ENCODE measurements at regions of chr1 and their contacts with region 1.

Region 1: GRCh38 chr1:231757101-231757404 is 130.5 kb downstream of the DISC1 start:
- DNase-seq: no peak
- ATAC-seq: no peak
- H3K4me3 ChIP-seq: no peak overlapping the region
- H3K4me3 Mint-ChIP-seq: peak overlapping the region; percentile 9
- H3K27ac ChIP-seq: no peak overlapping the region
- H3K27ac Mint-ChIP-seq: no peak overlapping the region
- H3K4me1 ChIP-seq: no peaks in the 10 kb centered on the region
- H3K4me1 Mint-ChIP-seq: no peaks in the 10 kb centered on the region
- H3K27me3 ChIP-seq: no peaks in the 10 kb centered on the region
- H3K27me3 Mint-ChIP-seq: no peaks in the 10 kb centered on the region
- CTCF ChIP-seq: peak; percentile 64

Region 2: GRCh38 chr1:231666220-231666936 is 90.7 kb before region 1 on chr1:
- CTCF ChIA-PET with region 1: no interaction called
- POLR2A ChIA-PET with region 1: no interaction called
- intact Hi-C with region 1: no loop called
- DNase-seq: no peak
- ATAC-seq: no peak
- H3K4me3 ChIP-seq: no peak overlapping the region
- H3K4me3 Mint-ChIP-seq: no peak overlapping the region
- H3K27ac ChIP-seq: no peak overlapping the region
- H3K27ac Mint-ChIP-seq: no peak overlapping the region
- H3K4me1 ChIP-seq: no peaks in the 10 kb centered on the region
- H3K4me1 Mint-ChIP-seq: peaks cover 16% of the 10 kb centered on the region
- H3K27me3 ChIP-seq: no peaks in the 10 kb centered on the region
- H3K27me3 Mint-ChIP-seq: no peaks in the 10 kb centered on the region
- CTCF ChIP-seq: no peak

Region 3: GRCh38 chr1:231768416-231768815 is 11.4 kb after region 1 on chr1:
- CTCF ChIA-PET with region 1: interaction called, 39 read pairs
- POLR2A ChIA-PET with region 1: no interaction called
- intact Hi-C with region 1: no loop called
- DNase-seq: no peak
- ATAC-seq: no peak
- H3K4me3 ChIP-seq: no peak overlapping the region
- H3K4me3 Mint-ChIP-seq: no peak overlapping the region
- H3K27ac ChIP-seq: no peak overlapping the region
- H3K27ac Mint-ChIP-seq: no peak overlapping the region
- H3K4me1 ChIP-seq: no peaks in the 10 kb centered on the region
- H3K4me1 Mint-ChIP-seq: no peaks in the 10 kb centered on the region
- H3K27me3 ChIP-seq: no peaks in the 10 kb centered on the region
- H3K27me3 Mint-ChIP-seq: no peaks in the 10 kb centered on the region
- CTCF ChIP-seq: no peak

Region 4: GRCh38 chr1:231776010-231776756 is 19.1 kb after region 1 on chr1:
- CTCF ChIA-PET with region 1: interaction called, 15 read pairs
- POLR2A ChIA-PET with region 1: no interaction called
- intact Hi-C with region 1: no loop called
- DNase-seq: no peak
- ATAC-seq: no peak
- H3K4me3 ChIP-seq: no peak overlapping the region
- H3K4me3 Mint-ChIP-seq: no peak overlapping the region
- H3K27ac ChIP-seq: no peak overlapping the region
- H3K27ac Mint-ChIP-seq: no peak overlapping the region
- H3K4me1 ChIP-seq: no peaks in the 10 kb centered on the region
- H3K4me1 Mint-ChIP-seq: no peaks in the 10 kb centered on the region
- H3K27me3 ChIP-seq: no peaks in the 10 kb centered on the region
- H3K27me3 Mint-ChIP-seq: no peaks in the 10 kb centered on the region
- CTCF ChIP-seq: no peak

Region 5: GRCh38 chr1:231818337-231818736 is 61.3 kb after region 1 on chr1:
- CTCF ChIA-PET with region 1: no interaction called
- POLR2A ChIA-PET with region 1: no interaction called
- intact Hi-C with region 1: no loop called
- DNase-seq: no peak
- ATAC-seq: no peak
- H3K4me3 ChIP-seq: no peak overlapping the region
- H3K4me3 Mint-ChIP-seq: no peak overlapping the region
- H3K27ac ChIP-seq: no peak overlapping the region
- H3K27ac Mint-ChIP-seq: no peak overlapping the region
- H3K4me1 ChIP-seq: no peaks in the 10 kb centered on the region
- H3K4me1 Mint-ChIP-seq: no peaks in the 10 kb centered on the region
- H3K27me3 ChIP-seq: no peaks in the 10 kb centered on the region
- H3K27me3 Mint-ChIP-seq: no peaks in the 10 kb centered on the region
- CTCF ChIP-seq: no peak

Region 6: GRCh38 chr1:231899713-231900440 is 142.8 kb after region 1 on chr1:
- CTCF ChIA-PET with region 1: no interaction called
- POLR2A ChIA-PET with region 1: no interaction called
- intact Hi-C with region 1: no loop called
- DNase-seq: no peak
- ATAC-seq: no peak
- H3K4me3 ChIP-seq: no peak overlapping the region
- H3K4me3 Mint-ChIP-seq: no peak overlapping the region
- H3K27ac ChIP-seq: no peak overlapping the region
- H3K27ac Mint-ChIP-seq: no peak overlapping the region
- H3K4me1 ChIP-seq: no peaks in the 10 kb centered on the region
- H3K4me1 Mint-ChIP-seq: peaks cover 7% of the 10 kb centered on the region
- H3K27me3 ChIP-seq: no peaks in the 10 kb centered on the region
- H3K27me3 Mint-ChIP-seq: no peaks in the 10 kb centered on the region
- CTCF ChIP-seq: no peak